Activated T-helper 2 cell treated with anti-CD3 and anti-CD28 coated beads, Interferon-gamma antibody, Interleukin-2, Interleukin-4, amounts not matched to agents 10 μg/mL and 5 μg/mL and 100 μg/mL, durations not matched to agents 14 hours and 24 hours and 36 hours (primary cell): ENCODE measurements at regions of chr9 and their contacts with region 1.

Region 1: DNA sequence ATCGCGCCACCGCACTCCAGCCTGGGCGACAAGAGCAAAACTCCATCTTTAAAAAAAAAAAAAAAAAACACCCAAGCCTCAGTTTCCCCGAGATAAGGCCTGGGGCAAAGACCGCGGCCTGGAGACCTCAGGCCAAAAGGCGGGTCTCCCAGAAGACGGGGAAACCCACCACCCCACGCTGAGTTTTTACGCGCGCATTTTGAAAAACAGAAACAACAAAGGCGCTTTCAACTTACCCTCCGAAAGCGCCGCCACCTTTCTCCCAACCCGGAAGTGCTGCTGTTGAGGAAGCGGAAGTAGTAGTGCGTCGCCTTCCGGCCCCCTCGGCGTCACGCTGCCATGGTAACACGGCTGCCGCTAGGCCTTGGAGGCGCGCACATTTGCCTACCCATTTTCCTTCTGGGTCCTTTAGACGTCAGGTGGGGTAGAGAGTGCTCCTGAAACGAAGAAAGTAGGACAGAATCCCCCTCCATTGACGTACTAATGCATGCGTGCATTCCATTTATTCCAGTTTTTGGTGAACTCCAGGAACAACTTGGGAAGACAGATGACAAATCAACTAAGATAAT is at the start of gene TTF1:
- DNase-seq: peak; percentile 91
- H3K4me3 Mint-ChIP-seq: peak within 1 kb of the TSS; percentile 80
- H3K27ac Mint-ChIP-seq: peak within 1 kb of the TSS; percentile 93
- H3K4me1 Mint-ChIP-seq: peaks cover 38% of the 10 kb centered on the region
- H3K27me3 Mint-ChIP-seq: peaks cover 20% of the 10 kb centered on the region
- total RNA-seq, gene TTF1: 35.4 and 36.2 TPM in 2 replicates

Region 2: GRCh38 chr9:132354637-132355355 is 51.8 kb before region 1 on chr9 and contains the start of gene SETX:
- intact Hi-C with region 1: loop called (anchors 1 kb)
- DNase-seq: peak; percentile 89
- H3K4me3 Mint-ChIP-seq: peak within 1 kb of the TSS; percentile 91
- H3K27ac Mint-ChIP-seq: peak within 1 kb of the TSS; percentile 93
- H3K4me1 Mint-ChIP-seq: peaks cover 37% of the 10 kb centered on the region
- H3K27me3 Mint-ChIP-seq: no peaks in the 10 kb centered on the region
- total RNA-seq, gene SETX: 49.8 and 51.0 TPM in 2 replicates

Region 3: DNA sequence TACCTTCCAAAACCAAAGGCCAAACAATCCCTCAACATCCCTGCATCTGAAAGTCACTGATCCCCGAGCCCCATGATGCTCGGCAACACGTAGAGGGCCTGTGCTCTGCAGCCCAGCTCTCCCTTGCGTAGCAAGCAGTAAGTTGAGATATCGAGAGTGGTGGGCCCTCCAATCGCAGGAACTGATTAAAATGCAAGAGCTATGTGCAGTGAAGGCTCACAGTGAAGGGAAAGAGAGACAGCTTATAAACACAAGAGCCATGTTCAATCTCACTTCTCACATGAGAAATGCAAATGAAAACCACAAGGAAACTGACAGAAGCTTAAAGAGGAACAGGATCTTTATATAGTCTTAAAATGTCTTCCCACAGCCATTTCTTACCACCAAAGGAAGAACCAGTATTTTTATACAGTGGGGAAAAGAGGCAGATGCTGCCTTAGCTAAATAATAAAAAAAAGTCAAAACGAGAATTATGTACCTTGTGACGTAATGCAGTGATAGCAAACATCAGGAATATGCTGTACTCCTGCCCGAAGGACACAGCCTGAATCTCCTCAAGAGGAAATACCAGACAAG is 24.6 kb before region 1 on chr9:
- intact Hi-C with region 1: no loop called
- DNase-seq: no peak
- H3K4me3 Mint-ChIP-seq: no peak overlapping the region
- H3K27ac Mint-ChIP-seq: peak overlapping the region; percentile 36
- H3K4me1 Mint-ChIP-seq: peaks cover 24% of the 10 kb centered on the region
- H3K27me3 Mint-ChIP-seq: no peaks in the 10 kb centered on the region

Region 4: DNA sequence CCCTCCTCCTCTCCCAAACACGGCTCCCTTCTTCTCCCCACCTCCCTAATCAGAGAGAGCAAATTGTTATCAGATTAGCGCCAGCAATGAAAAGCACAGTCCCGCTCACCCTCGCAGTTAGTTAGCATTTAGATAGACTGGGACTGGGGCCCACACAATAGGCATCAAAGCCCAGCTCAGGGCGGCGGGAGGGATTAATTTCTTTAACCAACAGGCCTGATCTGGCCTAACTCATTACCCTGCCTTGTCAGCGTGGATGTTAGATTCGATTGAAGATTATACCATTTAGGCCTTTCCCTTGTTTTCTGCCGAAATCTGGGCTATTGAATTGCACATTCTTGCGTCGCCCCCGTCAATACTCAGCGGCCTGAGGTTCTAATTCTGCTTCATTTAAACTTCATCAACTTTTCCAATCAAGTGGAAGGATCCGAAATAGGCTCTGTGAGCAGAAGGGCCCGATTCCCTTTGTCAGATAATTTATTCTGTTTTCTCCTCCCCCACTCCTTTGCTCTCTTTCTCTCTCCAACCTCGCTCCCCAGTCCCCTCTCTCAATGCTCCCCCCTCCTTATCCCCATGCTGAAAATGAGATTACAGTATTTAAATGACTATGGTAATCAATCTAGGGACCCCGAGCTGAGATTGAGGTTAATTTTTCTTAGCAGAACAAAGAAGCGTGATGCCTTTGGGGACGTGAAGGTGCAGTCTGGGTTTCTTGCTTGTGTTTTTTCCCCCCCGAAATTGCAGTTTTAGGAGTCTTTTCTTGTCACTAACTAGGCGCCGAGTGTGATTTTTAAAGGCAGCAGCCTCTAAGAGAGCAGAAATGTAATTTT is 18.4 kb after region 1 on chr9:
- intact Hi-C with region 1: no loop called
- DNase-seq: no peak
- H3K4me3 Mint-ChIP-seq: no peak overlapping the region
- H3K27ac Mint-ChIP-seq: no peak overlapping the region
- H3K4me1 Mint-ChIP-seq: no peaks in the 10 kb centered on the region
- H3K27me3 Mint-ChIP-seq: peaks cover 49% of the 10 kb centered on the region

Region 5: GRCh38 chr9:132439153-132439552 is 32.5 kb after region 1 on chr9:
- intact Hi-C with region 1: no loop called
- DNase-seq: no peak
- H3K4me3 Mint-ChIP-seq: no peak overlapping the region
- H3K27ac Mint-ChIP-seq: no peak overlapping the region
- H3K4me1 Mint-ChIP-seq: no peaks in the 10 kb centered on the region
- H3K27me3 Mint-ChIP-seq: peaks cover 26% of the 10 kb centered on the region

Region 6: GRCh38 chr9:132507746-132508469 is 101.3 kb after region 1 on chr9:
- intact Hi-C with region 1: loop called (anchors 5 kb)
- DNase-seq: peak; percentile 48
- H3K4me3 Mint-ChIP-seq: no peak overlapping the region
- H3K27ac Mint-ChIP-seq: no peak overlapping the region
- H3K4me1 Mint-ChIP-seq: peaks cover 8% of the 10 kb centered on the region
- H3K27me3 Mint-ChIP-seq: peaks cover 4% of the 10 kb centered on the region

Region 7: DNA sequence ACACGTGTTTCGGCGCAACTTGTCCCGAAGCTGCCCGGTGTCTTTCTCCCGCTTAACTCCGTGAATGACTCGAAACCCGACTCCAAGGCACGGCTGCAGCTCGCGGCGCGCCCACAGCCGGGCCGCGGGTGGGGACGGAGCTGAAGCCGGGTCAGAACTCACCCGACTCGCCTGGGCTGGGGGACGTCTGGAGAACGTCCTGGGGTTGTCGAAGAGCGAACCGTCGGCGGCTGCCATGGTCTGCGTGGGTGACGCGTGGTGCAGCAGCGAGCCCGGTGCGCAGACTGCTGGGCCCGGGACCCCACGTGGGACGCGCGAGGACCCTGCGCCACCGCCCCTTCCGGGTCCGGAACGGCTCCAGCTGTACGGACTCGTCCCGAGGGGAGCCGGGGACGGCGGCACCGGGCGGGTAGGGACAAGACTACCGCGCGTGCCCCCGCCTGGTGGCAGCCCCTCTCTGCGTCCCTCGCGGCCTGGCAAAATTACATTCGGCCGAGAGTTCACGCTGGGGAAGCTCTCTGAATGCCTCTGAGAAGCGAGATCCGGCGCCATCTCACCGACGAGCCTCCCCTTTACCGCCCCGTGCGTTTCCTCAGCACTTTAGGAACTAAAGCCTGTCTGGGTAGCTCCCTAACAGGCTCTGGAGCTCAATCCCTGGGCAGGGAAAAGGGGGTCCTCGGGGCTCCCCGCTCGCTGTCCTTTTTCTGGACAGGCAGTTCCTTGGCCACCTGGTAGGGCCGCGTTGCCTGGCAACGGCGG is 263.2 kb after region 1 on chr9 and contains the start of gene DDX31:
- intact Hi-C with region 1: loop called (anchors 5 kb)
- DNase-seq: peak; percentile 81
- H3K4me3 Mint-ChIP-seq: peak within 1 kb of the TSS; percentile 93
- H3K27ac Mint-ChIP-seq: peak within 1 kb of the TSS; percentile 83
- H3K4me1 Mint-ChIP-seq: peaks cover 33% of the 10 kb centered on the region
- H3K27me3 Mint-ChIP-seq: no peaks in the 10 kb centered on the region
- total RNA-seq, gene DDX31: 24.7 and 25.7 TPM in 2 replicates